GM10248 (cell line): ENCODE measurements at regions of chr2 and their contacts with region 1.

Region 1: GRCh38 chr2:189142893-189143759 is 36.4 kb downstream of the COL5A2 start:
- DNase-seq: peak; percentile 46
- CTCF ChIP-seq: peak; percentile 88

Region 2: DNA sequence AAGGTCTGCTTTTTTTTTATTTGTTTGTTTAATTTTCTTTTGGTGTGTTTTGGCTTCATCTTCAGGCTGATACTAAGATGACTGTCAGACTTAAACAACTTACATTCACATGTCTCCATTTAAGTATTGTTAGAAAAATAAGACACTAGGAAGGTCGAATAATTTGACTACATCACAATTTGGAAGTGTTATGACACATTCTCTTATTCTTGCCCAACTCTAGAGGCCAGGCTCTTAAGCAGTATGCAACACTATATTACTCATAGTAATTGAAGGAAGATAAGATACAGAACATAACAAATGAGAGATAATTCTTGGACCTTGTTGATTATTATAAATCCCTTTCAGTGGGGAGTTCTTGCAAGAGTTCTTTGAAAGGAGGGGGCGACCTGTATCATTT is 464.2 kb before region 1 on chr2:
- CTCF ChIA-PET with region 1: no interaction called
- POLR2A ChIA-PET with region 1: no interaction called
- DNase-seq: no peak
- CTCF ChIP-seq: no peak

Region 3: DNA sequence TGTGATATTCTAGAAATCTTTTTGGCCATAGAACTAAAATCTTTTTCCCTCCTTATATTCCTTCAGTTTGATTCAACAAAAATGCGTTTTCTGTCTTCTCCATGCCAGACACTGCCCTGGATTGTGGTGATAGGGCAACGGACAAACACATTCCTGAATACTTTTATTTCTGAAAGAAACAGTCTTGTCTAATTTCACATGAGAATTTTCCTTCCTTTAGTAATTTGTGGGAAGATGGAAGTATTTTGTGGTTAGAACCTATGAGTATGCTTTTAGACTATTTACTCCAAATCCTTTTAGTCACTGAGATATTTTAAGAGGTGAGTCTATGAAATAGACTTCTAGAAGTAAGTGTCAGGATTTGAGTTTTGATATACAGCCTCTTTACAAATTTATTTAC is 13.2 kb before region 1 on chr2:
- CTCF ChIA-PET with region 1: interaction called, 33 read pairs
- POLR2A ChIA-PET with region 1: no interaction called
- DNase-seq: no peak
- CTCF ChIP-seq: no peak

Region 4: DNA sequence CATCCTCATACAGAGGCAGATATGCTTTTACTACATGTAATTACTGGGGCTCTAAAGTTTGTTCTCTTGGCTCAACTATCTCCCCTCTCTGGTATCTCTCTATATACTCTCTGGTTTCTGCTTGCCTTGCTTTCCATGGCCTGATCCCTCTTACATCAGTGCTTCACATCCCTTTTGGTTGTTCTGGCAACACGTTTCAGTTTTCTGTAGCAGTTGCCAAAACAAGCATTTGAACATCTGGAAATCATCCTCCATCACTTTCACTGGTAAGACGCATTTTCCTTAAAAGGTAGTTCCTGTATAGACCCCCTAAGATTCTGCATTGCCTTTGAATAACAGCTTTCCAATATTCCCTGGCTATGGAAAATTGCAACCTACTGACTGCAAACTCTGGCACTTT is 10.5 kb after region 1 on chr2:
- CTCF ChIA-PET with region 1: interaction called, 19 read pairs
- POLR2A ChIA-PET with region 1: no interaction called
- DNase-seq: no peak
- CTCF ChIP-seq: no peak

Region 5: GRCh38 chr2:189164746-189165145 is 21.6 kb after region 1 on chr2:
- CTCF ChIA-PET with region 1: interaction called, 15 read pairs
- POLR2A ChIA-PET with region 1: no interaction called
- DNase-seq: no peak
- CTCF ChIP-seq: no peak

Region 6: DNA sequence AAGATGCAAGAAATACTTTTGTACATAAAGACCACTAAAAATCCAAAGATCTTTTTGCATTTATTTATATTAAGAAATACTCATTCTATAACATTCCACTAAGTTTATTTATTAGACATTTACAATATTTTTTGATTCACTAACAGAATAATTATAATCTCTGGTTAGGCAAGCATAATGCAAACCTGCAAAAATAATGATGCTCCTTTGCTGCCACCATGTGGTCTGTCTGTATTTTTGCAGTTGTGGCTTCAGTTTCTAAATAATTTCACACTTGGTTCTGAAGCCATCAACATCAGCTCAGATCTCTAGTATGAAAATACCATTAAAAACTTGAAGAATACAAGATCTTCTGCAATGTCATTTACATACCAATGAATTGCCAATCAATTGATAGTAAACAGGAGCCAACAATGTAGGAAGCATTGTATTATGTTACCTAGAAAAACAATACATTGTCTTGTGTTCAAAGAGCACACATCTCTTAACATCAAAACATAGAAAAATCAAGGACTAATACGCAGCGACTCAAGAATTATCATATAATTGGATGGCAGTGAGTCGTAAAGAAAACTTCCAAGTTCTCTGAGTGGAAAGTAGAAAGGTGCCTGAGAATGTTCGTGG is 269.3 kb after region 1 on chr2:
- CTCF ChIA-PET with region 1: interaction called, 13 read pairs
- POLR2A ChIA-PET with region 1: no interaction called
- DNase-seq: peak; percentile 39
- CTCF ChIP-seq: peak; percentile 75